ENCODE measurements at regions of chr11 and their contacts with region 1.

Region 1: GRCh38 chr11:91664521-91664920 is 560.1 kb upstream of the FAT3 start:
- DNase-seq: no peak
- ATAC-seq: no peak
- H3K4me3 ChIP-seq: no peak overlapping the region
- H3K27ac ChIP-seq: no peak overlapping the region
- H3K4me1 ChIP-seq: no peaks in the 10 kb centered on the region
- H3K27me3 ChIP-seq: no peaks in the 10 kb centered on the region

Region 2: DNA sequence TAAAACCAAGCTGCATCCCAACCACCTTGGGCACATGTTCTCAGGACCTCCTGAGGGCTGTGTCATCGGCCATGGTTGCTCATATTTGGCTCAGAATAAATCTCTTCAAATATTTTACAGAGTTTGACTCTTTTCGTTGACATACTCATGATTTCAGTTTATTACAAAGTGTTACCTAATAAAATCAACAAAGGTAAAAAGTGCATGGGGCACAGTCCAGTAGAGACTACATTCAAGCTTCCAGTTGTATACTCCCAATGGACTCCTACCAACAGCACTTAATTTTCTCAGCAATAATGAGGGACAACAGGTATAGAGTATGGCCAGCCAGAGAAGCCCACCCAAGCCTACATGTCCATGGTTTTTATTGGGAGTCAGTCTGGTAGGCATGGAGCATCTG is 212.2 kb after region 1 on chr11:
- intact Hi-C with region 1: no loop called
- DNase-seq: no peak
- ATAC-seq: no peak
- H3K4me3 ChIP-seq: no peak overlapping the region
- H3K27ac ChIP-seq: no peak overlapping the region
- H3K4me1 ChIP-seq: no peaks in the 10 kb centered on the region
- H3K27me3 ChIP-seq: no peaks in the 10 kb centered on the region

Region 3: DNA sequence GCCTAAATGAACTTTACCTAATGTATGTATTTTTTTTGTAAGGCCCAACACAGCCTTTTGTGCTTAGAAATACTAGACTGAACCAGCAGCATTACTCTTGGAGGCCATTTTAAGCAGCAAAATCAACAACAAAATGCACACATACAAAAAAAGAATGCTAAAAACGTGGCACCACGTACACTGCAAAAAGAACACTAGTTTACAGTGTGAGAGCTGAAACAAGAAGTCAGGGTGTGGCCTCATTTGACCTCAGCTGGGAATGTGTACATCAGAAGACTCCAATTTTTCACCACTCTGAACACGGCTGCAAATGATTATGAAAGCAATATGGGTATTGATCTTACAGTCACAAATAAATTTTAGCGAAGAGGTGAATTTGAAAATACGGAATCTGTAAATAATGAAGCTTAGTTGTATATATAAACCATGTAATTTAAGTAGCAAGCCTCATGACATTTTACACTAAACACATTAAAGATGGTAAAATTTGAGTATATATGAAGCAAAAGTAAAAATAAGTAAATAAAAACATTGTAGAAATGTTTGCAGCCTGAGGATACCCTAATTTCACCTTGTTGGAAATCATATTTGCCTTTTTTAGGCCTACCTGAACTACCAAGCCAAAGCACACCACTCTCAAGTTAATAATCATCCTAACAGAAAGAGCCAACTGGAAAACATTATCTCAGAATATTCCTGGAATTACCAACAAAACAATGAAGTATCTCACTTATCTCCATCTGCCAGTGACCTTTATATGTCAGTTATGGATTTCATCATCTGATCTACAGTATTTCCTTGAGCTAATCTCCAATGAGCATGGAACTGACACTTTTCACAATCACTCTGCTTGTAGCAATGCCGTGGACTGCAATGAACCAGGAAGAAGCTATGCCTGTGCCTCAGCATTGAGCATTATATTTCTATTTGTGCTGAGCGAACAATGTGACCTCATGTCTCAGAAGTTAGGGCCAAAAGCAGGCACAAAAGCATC is 240.6 kb after region 1 on chr11:
- intact Hi-C with region 1: no loop called
- DNase-seq: no peak
- ATAC-seq: no peak
- H3K4me3 ChIP-seq: no peak overlapping the region
- H3K27ac ChIP-seq: no peak overlapping the region
- H3K4me1 ChIP-seq: no peaks in the 10 kb centered on the region
- H3K27me3 ChIP-seq: no peaks in the 10 kb centered on the region

Region 4: GRCh38 chr11:92340839-92341238 is 676.3 kb after region 1 on chr11:
- intact Hi-C with region 1: loop called in 1 of 2 experiments (anchors 10 kb)
- DNase-seq: no peak
- ATAC-seq: no peak
- H3K4me3 ChIP-seq: no peak overlapping the region
- H3K27ac ChIP-seq: no peak overlapping the region
- H3K4me1 ChIP-seq: no peaks in the 10 kb centered on the region
- H3K27me3 ChIP-seq: no peaks in the 10 kb centered on the region